Activated T-helper 1 cell treated with anti-CD3 and anti-CD28 coated beads, Interleukin-12 subunit alpha, Interleukin-12 subunit beta, Interleukin-2, Interleukin-4 antibody, amounts not matched to agents 30 ng/mL and 10 ng/mL and 1 ng/mL, durations not matched to agents 14 hours and 24 hours and 36 hours (primary cell): ENCODE measurements at regions of chr2 and their contacts with region 1.

Region 1: GRCh38 chr2:126527836-126528507 is 128.0 kb upstream of the GYPC start:
- DNase-seq: peak; percentile 38
- H3K4me3 Mint-ChIP-seq: no peak overlapping the region
- H3K27ac Mint-ChIP-seq: no peak overlapping the region
- H3K4me1 Mint-ChIP-seq: no peaks in the 10 kb centered on the region
- H3K27me3 Mint-ChIP-seq: peaks cover 6% of the 10 kb centered on the region

Region 2: GRCh38 chr2:126749537-126749936 is 221.6 kb after region 1 on chr2:
- intact Hi-C with region 1: loop called (anchors 1 kb)
- DNase-seq: no peak
- H3K4me3 Mint-ChIP-seq: no peak overlapping the region
- H3K27ac Mint-ChIP-seq: no peak overlapping the region
- H3K4me1 Mint-ChIP-seq: no peaks in the 10 kb centered on the region
- H3K27me3 Mint-ChIP-seq: peaks cover 7% of the 10 kb centered on the region